HepG2 (cell line): ENCODE measurements at regions of chr14 and their contacts with region 1.

Region 1: DNA sequence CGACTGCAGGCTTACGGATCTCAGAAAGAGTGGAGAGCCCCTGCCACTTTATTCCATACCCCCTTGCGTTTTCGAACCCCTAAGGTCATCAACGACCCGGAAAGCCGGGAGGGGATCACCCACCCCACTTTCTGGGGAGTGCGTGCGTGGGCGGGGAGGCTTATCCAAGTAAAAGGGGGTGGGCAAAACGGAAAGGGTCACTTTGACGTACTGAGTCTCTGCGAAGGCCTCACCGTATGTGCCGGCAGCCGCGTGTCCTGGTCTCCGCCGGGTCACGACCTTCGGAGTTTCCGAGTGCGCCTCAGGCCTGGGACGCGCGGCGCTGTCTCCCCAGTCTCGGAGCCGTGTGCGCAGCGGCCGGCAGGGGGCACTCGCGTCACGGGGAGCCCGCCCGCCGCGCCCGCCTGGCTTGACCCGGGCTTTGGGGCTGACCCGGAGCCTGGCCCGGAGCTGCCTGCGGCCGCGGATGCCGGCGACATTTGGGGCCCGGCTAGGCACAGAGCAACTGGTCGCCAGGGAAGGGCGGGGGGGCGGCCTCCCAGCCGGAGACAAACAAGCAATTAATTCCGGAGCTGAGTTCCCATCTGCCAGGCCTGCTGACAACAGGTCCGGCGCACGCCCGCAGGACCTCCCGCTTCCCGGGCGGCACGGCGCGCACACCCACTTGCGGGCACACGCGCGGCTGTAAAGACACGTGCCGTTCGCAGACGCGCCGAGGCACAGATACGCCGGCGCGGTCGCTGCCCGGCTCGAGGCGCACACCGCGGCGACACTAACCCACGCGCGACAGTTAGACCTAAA is 890 bp upstream of the KIF26A start:
- DNase-seq: peak; percentile 10
- ATAC-seq: peak; percentile 84
- H3K4me3 ChIP-seq: no peak overlapping the region; a peak in 1 of 6 replicates
- H3K27ac ChIP-seq: no peak overlapping the region
- H3K4me1 ChIP-seq: no peaks in the 10 kb centered on the region
- H3K27me3 ChIP-seq: peaks cover 8 to 58% of the 10 kb centered on the region in 2 experiments; a peak in 4 of 5 replicates
- CTCF ChIP-seq: peak; percentile 84
- EP300 ChIP-seq: no peak
- POLR2A ChIP-seq: no peak
- RAD21 ChIP-seq: peak; percentile 92

Region 2: DNA sequence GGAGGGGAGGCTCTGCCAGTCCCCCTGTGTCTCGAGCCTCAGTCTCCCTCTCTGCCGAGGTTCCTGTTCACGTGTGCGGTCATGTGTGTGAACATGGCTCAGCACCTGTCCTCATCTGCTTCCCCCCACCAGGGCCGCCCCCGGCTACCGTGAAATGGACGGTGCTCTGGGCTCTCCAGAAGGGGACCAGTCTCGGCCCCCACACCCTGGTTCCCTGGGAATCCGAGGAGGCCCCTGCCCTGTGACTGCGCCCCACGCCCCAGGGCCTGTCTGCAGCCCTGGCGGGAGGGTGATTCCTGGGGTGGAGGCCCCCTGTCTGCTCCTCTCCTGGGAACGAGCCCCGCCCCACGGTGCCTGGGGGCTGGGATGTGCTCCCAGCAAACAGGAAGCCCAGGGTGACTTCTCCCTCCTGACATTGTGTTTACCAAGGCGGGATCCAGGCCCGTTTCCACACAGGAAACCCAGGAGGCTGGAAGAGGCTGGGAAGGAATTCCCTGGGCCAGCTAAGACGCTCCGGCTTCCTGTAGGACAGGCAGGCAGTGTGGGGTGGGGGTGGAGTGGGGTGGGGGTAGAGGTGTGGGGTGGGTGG is 47.5 kb after region 1 on chr14:
- CTCF ChIA-PET with region 1: no interaction called
- POLR2A ChIA-PET with region 1: no interaction called
- in situ Hi-C with region 1: no loop called
- intact Hi-C with region 1: no loop called
- DNase-seq: no peak
- ATAC-seq: no peak
- H3K4me3 ChIP-seq: no peak overlapping the region
- H3K27ac ChIP-seq: no peak overlapping the region
- H3K4me1 ChIP-seq: no peaks in the 10 kb centered on the region
- H3K27me3 ChIP-seq: peaks cover 7 to 26% of the 10 kb centered on the region in 2 experiments; a peak in 4 of 5 replicates
- CTCF ChIP-seq: no peak
- EP300 ChIP-seq: no peak
- POLR2A ChIP-seq: no peak
- RAD21 ChIP-seq: no peak

Region 3: GRCh38 chr14:104563742-104564615 is 426.5 kb after region 1 on chr14:
- CTCF ChIA-PET with region 1: interaction called, 9 read pairs
- POLR2A ChIA-PET with region 1: no interaction called
- in situ Hi-C with region 1: loop called (anchors 5 kb)
- intact Hi-C with region 1: loop called (anchors 1 kb)
- DNase-seq: peak; percentile 18
- ATAC-seq: peak; percentile 83
- H3K4me3 ChIP-seq: no peak overlapping the region
- H3K27ac ChIP-seq: no peak overlapping the region
- H3K4me1 ChIP-seq: no peaks in the 10 kb centered on the region
- H3K27me3 ChIP-seq: peaks cover 19 to 83% of the 10 kb centered on the region in 2 experiments
- CTCF ChIP-seq: peak; percentile 92
- EP300 ChIP-seq: no peak
- POLR2A ChIP-seq: no peak
- RAD21 ChIP-seq: peak; percentile 81

Region 4: DNA sequence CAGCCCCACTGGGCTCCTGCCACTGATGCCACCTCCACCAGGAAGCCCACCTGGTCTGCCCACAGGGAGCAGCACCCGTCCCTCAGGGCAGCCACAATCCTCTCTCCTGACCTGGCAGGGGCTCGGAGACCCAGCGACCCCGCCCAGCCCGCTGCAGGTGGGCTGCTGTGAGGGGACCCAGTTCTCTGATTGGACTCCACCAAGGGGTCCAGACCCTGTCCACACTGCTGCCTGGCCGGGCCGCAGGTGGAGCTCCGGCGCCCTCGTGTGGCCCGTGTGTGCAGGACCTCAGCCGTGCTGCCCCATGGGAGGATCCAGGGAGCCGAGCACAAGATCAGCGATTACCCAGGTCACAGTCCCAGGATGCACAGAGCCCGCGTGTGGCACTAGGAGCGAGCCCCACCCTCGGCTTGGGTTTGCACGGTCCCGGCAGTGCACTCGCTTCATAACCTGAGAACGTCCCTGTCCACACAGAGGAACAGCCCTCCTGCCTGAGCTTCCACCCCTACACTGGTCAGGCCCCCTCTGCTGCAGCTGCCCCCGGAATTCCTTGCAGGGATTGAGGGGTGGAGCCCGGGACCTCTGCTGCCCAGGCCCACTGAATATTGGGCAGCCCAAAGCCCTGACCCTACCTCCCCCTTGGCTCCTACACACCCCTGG is 502.5 kb after region 1 on chr14:
- CTCF ChIA-PET with region 1: interaction called, 10 read pairs
- POLR2A ChIA-PET with region 1: no interaction called
- in situ Hi-C with region 1: loop called (anchors 5 kb)
- intact Hi-C with region 1: no loop called
- DNase-seq: peak; percentile 32
- ATAC-seq: peak; percentile 95
- H3K4me3 ChIP-seq: no peak overlapping the region
- H3K27ac ChIP-seq: no peak overlapping the region
- H3K4me1 ChIP-seq: peaks cover 27% of the 10 kb centered on the region; the same call in 1 of the 2 replicates
- H3K27me3 ChIP-seq: peaks cover 13 to 76% of the 10 kb centered on the region in 2 experiments
- CTCF ChIP-seq: peak; percentile 97
- EP300 ChIP-seq: no peak
- POLR2A ChIP-seq: no peak
- RAD21 ChIP-seq: peak; percentile 95